Heart left ventricle (tissue), 16 donors: ENCODE measurements at regions of chr14 and their contacts with region 1.

Region 1: DNA sequence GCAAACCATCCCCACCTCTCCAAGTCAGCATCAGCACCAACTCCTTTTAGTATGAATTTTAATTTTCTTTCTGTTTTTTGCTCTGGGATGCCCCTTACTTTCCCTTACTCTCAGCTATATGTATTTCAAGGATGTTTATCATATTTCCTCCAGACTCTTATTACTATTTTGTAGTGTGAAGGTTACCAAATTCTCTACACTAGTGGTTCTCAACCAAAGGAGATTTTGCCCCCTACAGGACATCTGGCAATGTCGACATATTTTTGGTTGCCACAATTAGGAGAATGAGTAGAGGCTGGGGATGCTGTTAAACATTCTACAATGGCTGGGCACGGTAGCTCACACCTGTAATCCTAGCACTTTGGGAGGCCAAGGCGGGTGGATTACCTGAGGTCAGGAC is 29.1 kb upstream of the SOS2 start:
- DNase-seq: no peak
- ATAC-seq: peak in 1 of 4 donors; percentile 60
- H3K4me3 ChIP-seq: no peak overlapping the region
- H3K27ac ChIP-seq: no peak overlapping the region
- H3K4me1 ChIP-seq: peaks cover 0 to 4% (median 0%) of the 10 kb centered on the region in 12 donors
- H3K27me3 ChIP-seq: no peaks in the 10 kb centered on the region
- CTCF ChIP-seq: peak; percentile 18 to 59 (median 44)
- POLR2A ChIP-seq: no peak

Region 2: DNA sequence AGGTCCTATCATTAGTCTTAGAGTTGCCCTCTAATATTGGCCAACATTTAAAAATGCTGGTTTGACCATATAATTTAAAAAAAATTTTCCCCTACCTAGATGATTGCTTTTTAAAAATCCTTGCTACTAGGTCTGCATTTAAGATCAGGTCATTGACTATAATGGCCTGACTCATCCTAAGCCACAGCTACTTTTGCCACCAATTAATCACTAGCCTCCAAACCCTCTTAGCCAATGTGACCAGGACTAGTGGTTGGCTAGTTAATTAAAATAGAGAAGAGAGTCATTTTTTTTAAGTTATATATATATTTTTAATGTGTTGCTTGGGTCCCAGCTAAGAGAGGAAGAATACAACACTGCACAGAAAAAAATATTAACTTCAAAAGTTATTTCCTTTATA is 86.6 kb before region 1 on chr14:
- intact Hi-C with region 1: loop called in 1 of 10 experiments (anchors 10 kb)
- DNase-seq: no peak
- ATAC-seq: no peak
- H3K4me3 ChIP-seq: no peak overlapping the region
- H3K27ac ChIP-seq: no peak overlapping the region
- H3K4me1 ChIP-seq: no peaks in the 10 kb centered on the region
- H3K27me3 ChIP-seq: no peaks in the 10 kb centered on the region
- CTCF ChIP-seq: no peak
- POLR2A ChIP-seq: no peak

Region 3: GRCh38 chr14:50231475-50232275 is 28.8 kb before region 1 on chr14 and contains the start of gene SOS2:
- intact Hi-C with region 1: no loop called
- DNase-seq: peak; percentile 89 to 94 (median 92)
- ATAC-seq: peak; percentile 82 to 96 (median 95)
- H3K4me3 ChIP-seq: peak within 1 kb of the TSS; percentile 67 to 95 (median 80)
- H3K27ac ChIP-seq: peak within 1 kb of the TSS; percentile 93 to 99 (median 98)
- H3K4me1 ChIP-seq: peaks cover 0 to 53% (median 40%) of the 10 kb centered on the region in 12 donors
- H3K27me3 ChIP-seq: no peaks in the 10 kb centered on the region
- CTCF ChIP-seq: peak in 3 of 12 donors; percentile 23 to 37 (median 26)
- POLR2A ChIP-seq: peak; percentile 42 to 84
- total RNA-seq, gene SOS2: 26.4 to 47.3 (median 31.5) TPM

Region 4: DNA sequence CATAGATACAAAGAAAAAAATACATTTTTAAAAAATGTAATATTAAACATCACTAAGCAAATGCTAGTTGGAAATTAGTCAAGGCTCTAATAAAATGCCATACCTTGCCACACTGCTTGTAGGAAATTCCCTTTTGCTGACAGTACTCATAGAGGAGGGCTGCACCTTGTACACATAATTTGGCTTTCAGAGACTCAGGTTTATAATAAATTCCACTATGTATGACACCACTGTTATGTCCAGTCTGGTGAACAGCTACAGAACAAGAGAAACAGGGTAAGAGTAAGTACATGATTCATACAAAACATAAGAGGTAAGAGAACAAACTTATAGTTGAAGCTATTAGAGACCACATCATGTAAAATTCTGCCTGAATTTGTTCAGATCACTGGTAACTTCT is 41.4 kb after region 1 on chr14:
- intact Hi-C with region 1: no loop called
- DNase-seq: no peak
- ATAC-seq: no peak
- H3K4me3 ChIP-seq: no peak overlapping the region
- H3K27ac ChIP-seq: no peak overlapping the region
- H3K4me1 ChIP-seq: no peaks in the 10 kb centered on the region
- H3K27me3 ChIP-seq: no peaks in the 10 kb centered on the region
- CTCF ChIP-seq: no peak
- POLR2A ChIP-seq: no peak

Region 5: GRCh38 chr14:50342221-50343078 is 81.9 kb after region 1 on chr14:
- intact Hi-C with region 1: no loop called
- DNase-seq: peak; percentile 58 to 64 (median 62)
- ATAC-seq: peak; percentile 85 to 95 (median 93)
- H3K4me3 ChIP-seq: peak overlapping the region in 9 of 12 donors; percentile 3 to 38 (median 26)
- H3K27ac ChIP-seq: peak overlapping the region; percentile 18 to 77 (median 49)
- H3K4me1 ChIP-seq: peaks cover 0 to 38% (median 22%) of the 10 kb centered on the region in 12 donors
- H3K27me3 ChIP-seq: no peaks in the 10 kb centered on the region
- CTCF ChIP-seq: peak in 11 of 12 donors; percentile 19 to 64 (median 38)
- POLR2A ChIP-seq: no peak